Right ventricle myocardium inferior (tissue), 1 donor: ENCODE measurements at regions of chr1 and their contacts with region 1.

Region 1: DNA sequence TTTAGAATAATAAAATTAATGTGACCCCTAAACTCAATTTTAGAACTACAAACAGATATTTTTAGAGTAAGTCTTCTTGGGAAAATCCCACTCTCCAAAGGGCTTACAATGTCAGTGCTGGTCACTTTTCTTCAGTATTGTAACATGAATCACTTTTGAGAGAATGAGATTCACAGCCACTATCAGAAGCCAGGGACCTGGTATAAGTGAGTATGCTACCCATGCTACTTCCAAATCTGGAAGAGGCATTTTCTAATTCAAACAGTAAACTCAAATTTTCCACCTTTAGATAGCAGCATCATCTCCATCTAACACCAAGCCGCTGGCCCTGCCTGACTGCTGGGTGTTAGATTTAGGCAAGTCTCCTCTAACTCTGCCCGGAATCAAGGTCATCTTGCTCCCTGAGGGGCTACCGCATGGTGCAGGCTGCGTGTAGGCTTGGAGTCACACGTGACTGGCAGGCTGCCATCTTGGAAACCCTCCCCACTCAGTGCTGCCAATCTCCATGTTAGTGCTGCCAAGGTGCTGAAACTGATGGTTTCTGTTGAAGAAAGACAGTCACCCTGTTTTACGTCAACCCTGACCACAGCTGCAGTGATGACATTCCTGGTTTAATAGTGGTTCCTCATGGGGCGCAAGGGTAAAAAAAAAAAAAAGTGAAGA is 882.9 kb upstream of the B3GALT2 start:
- DNase-seq: peak; percentile 74
- ATAC-seq: peak; percentile 91

Region 2: GRCh38 chr1:193406901-193407300 is 662.4 kb before region 1 on chr1:
- intact Hi-C with region 1: loop called (anchors 5 kb)
- DNase-seq: no peak
- ATAC-seq: no peak

Region 3: GRCh38 chr1:193654951-193655705 is 414.2 kb before region 1 on chr1:
- intact Hi-C with region 1: loop called (anchors 10 kb)
- DNase-seq: no peak
- ATAC-seq: peak; percentile 81

Region 4: GRCh38 chr1:193700710-193701355 is 368.5 kb before region 1 on chr1:
- intact Hi-C with region 1: no loop called
- DNase-seq: no peak
- ATAC-seq: no peak

Region 5: GRCh38 chr1:193890935-193891334 is 178.4 kb before region 1 on chr1:
- intact Hi-C with region 1: loop called (anchors 5 kb)
- DNase-seq: no peak
- ATAC-seq: no peak